Ascending aorta (tissue), 2 donors: ENCODE measurements at regions of chr1 and their contacts with region 1.

Region 1: GRCh38 chr1:3012456-3013291 is 8.6 kb upstream of the ACTRT2 start:
- DNase-seq: peak in 1 of 2 donors; percentile 82
- H3K4me3 ChIP-seq: peak overlapping the region; percentile 4 to 45
- H3K27ac ChIP-seq: peak overlapping the region in 1 of 2 donors; percentile 71
- H3K4me1 ChIP-seq: peaks cover 5 to 11% of the 10 kb centered on the region in 2 donors
- H3K27me3 ChIP-seq: no peaks in the 10 kb centered on the region
- CTCF ChIP-seq: peak; percentile 59 to 99 (median 94)

Region 2: DNA sequence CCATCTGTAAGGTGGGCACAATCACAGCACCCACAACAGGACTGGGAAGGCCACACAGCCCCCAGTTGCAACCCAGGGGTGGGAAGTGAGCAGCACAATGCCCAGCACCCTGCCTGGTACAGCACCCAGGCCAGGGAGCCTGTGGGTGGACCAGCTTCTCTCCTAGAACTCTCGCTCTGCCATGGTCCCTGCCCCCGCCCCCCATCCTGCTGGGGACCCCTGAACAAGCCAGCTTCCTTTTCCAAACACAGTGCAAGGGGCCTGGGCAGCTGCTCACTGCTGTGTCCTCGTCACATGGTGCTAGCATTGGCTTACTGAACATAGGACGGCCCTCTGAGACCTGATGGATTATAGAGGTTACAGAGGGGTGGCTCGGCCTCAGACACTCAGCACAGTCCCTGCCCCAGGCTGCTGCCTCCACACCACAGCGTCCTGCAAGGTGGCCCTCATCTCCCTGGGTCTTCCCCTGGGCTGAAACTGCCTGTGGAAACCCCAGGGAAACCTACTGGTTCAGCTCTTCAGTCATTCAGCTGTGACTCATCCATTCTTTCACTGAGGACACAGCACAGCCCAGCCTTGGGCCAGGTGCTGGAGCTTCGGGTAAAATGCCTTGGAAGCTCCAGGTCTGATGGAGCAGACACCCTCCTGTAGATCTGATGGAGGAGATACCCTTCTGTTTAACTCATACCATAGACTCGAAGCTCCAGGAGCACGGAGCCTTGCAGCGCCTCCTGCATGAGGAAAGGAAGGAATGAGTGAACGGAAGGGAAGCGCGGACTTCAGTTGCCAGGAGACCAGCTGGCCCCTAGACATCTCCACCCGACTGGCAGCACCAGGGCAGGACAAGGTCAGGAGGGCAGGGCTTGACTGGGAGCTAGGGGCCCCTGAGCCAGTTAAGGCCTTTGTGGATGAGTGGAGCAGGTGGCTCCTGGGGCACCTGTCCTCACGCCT is 48.2 kb after region 1 on chr1:
- intact Hi-C with region 1: loop called (anchors 2 kb)
- DNase-seq: peak in 1 of 2 donors; percentile 61
- H3K4me3 ChIP-seq: no peak overlapping the region
- H3K27ac ChIP-seq: no peak overlapping the region
- H3K4me1 ChIP-seq: peaks cover 2 to 30% of the 10 kb centered on the region in 2 donors
- H3K27me3 ChIP-seq: no peaks in the 10 kb centered on the region
- CTCF ChIP-seq: no peak